Ascending aorta (tissue), 2 donors: ENCODE measurements at regions of chr18 and their contacts with region 1.

Region 1: DNA sequence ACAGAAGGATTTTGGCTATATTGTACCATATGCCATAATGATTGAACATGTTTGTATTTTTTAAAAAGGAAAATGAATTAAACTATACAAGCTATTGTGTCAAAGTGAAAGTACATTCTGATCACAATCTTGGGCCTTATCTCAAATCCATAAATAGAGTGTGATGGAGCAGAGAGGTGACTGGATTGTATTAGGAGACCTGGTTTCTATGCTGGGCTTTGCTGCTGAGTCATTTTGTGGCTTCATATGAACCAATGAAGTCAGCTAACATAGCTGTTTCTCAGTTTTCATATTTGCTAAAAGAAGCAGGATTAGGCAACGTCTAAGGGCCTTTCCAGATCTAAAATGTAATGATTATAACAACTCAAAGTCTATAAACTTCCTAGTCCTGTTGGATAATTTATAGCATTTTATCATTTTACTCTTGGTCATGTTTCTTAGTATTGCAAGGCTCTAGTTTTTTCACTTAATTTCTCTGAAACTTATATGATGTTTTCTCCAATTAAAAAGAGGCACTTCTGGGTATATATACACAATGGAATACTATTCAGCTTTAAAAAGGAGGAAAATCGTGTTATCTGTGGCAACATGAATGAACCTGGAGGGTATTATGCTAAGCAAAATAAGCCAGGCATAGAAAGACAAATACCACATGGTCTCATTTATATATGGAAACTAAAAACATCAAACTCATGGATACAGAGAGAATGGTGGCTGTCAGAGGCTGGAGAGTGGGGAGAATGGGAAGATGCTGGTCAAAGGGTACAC is 112.3 kb downstream of the MEP1B start:
- DNase-seq: peak in 1 of 2 donors; percentile 72
- H3K4me3 ChIP-seq: no peak overlapping the region
- H3K27ac ChIP-seq: peak overlapping the region; percentile 82 to 91
- H3K4me1 ChIP-seq: peaks cover 4 to 21% of the 10 kb centered on the region in 2 donors
- H3K27me3 ChIP-seq: no peaks in the 10 kb centered on the region
- CTCF ChIP-seq: no peak

Region 2: GRCh38 chr18:32383050-32383819 is 81.1 kb after region 1 on chr18:
- intact Hi-C with region 1: loop called (anchors 5 kb)
- DNase-seq: no peak
- H3K4me3 ChIP-seq: peak overlapping the region in 1 of 2 donors; percentile 5
- H3K27ac ChIP-seq: peak overlapping the region; percentile 71 to 93
- H3K4me1 ChIP-seq: peaks cover 0 to 21% of the 10 kb centered on the region in 2 donors
- H3K27me3 ChIP-seq: no peaks in the 10 kb centered on the region
- CTCF ChIP-seq: no peak